Activated CD4-positive, alpha-beta T cell treated with anti-CD3 and anti-CD28 coated beads, Interleukin-2, amount 10 ng/mL, durations not matched to agents 7 days and 5 days (primary cell): ENCODE measurements at regions of chr5 and their contacts with region 1.

Region 1: GRCh38 chr5:88690409-88691229 is 192.4 kb downstream of the MEF2C start:
- DNase-seq: peak; percentile 72
- H3K4me3 Mint-ChIP-seq: peak overlapping the region; percentile 60
- H3K27ac Mint-ChIP-seq: peak overlapping the region; percentile 84
- H3K4me1 Mint-ChIP-seq: peaks cover 9% of the 10 kb centered on the region
- H3K27me3 Mint-ChIP-seq: peaks cover 95% of the 10 kb centered on the region

Region 2: DNA sequence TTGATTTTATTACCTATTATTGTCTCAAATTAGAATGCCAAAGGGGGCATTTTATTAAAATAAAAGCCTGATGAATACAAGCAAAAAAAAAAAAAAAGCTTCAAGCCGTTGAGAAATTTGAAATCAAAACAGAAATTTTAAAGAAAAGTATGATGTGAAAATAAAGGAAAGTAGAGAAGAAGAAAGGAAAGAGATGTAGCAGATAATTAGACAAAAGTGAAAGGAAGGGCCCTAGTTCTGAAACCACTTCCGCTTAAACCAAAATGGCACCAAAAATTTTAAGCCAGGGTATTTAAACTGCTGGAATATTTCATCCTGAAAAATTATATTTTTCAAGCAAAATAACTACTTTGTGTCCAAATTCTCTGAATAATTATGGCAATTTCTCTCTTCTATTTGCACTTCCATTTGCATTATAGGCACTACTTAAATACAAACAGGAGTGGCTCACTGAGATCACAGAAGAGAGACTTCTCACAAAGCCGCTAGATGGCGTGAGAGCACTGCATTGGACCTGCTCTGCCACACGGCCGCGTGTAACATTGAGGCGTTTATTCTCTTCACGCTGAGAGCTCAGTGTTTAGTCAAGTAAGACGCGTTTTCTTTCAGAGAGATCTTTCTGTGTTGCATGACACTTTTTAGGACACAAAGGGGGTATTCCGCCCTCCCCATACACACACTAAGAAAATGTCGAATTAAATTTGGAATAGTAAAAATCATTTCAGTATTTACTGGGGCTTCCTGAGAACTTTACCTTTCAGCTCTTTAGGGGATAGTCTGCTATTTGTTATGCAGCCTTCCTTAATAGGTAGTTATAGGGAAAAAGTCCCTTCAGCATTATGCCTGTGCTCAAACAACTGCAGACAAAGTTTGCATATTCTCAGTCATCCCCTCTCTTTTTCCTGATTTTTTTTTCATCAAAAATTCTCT is 909.5 kb before region 1 on chr5:
- CTCF ChIA-PET with region 1: interaction called, 10 read pairs
- POLR2A ChIA-PET with region 1: no interaction called
- DNase-seq: peak; percentile 87
- H3K4me3 Mint-ChIP-seq: no peak overlapping the region
- H3K27ac Mint-ChIP-seq: no peak overlapping the region
- H3K4me1 Mint-ChIP-seq: no peaks in the 10 kb centered on the region
- H3K27me3 Mint-ChIP-seq: peaks cover 20% of the 10 kb centered on the region

Region 3: GRCh38 chr5:88666761-88667495 is 23.7 kb before region 1 on chr5:
- CTCF ChIA-PET with region 1: interaction called, 18 read pairs
- POLR2A ChIA-PET with region 1: no interaction called
- DNase-seq: peak; percentile 24
- H3K4me3 Mint-ChIP-seq: peak overlapping the region; percentile 71
- H3K27ac Mint-ChIP-seq: no peak overlapping the region
- H3K4me1 Mint-ChIP-seq: peaks cover 26% of the 10 kb centered on the region
- H3K27me3 Mint-ChIP-seq: peaks cover 91% of the 10 kb centered on the region

Region 4: DNA sequence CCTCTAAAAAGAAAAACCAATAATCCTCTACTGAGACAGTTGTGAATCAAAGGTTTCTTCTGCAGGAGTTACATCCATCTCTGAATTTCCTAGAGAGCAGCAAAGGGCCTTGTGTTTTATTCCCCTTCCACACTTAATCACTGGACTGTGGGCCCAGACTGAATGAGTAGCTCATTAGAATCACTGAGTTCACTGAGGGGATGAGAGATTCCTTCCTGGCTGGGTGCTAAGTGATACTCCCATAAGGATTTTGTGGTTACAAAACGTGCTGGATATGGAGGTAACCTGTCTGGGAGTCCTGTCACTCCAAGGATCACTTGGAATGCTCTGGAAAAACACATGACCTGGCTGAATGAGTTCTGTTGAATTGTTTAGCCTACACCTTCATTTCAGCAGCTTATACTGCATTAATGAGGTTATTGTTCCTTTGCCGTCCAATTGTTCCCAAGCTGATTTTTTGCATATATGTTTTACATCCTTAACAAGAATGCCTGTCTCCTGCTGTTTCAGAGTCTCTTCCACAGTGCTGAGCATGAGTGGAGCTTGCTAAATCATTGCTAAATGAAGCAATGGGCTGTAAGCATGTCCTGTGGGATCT is 109.4 kb after region 1 on chr5:
- CTCF ChIA-PET with region 1: no interaction called
- POLR2A ChIA-PET with region 1: no interaction called
- DNase-seq: no peak
- H3K4me3 Mint-ChIP-seq: no peak overlapping the region
- H3K27ac Mint-ChIP-seq: no peak overlapping the region
- H3K4me1 Mint-ChIP-seq: no peaks in the 10 kb centered on the region
- H3K27me3 Mint-ChIP-seq: peaks cover 6% of the 10 kb centered on the region